ENCODE measurements at regions of chr19 and their contacts with region 1.

Region 1: GRCh38 chr19:47790398-47790814 is 11.9 kb downstream of the SELENOW start:
- DNase-seq: peak; percentile 93
- ATAC-seq: peak; percentile 81
- H3K4me3 Mint-ChIP-seq: no peak overlapping the region
- H3K27ac Mint-ChIP-seq: no peak overlapping the region
- H3K4me1 Mint-ChIP-seq: no peaks in the 10 kb centered on the region
- H3K27me3 Mint-ChIP-seq: no peaks in the 10 kb centered on the region

Region 2: GRCh38 chr19:47713046-47714021 is 77.1 kb before region 1 on chr19 and contains the start of gene EHD2:
- CTCF ChIA-PET with region 1: interaction called, 6 read pairs
- POLR2A ChIA-PET with region 1: no interaction called
- intact Hi-C with region 1: loop called (anchors 1 to 5 kb)
- DNase-seq: peak; percentile 76
- ATAC-seq: peak; percentile 78
- H3K4me3 Mint-ChIP-seq: peak within 1 kb of the TSS; percentile 53
- H3K27ac Mint-ChIP-seq: no peak within 1 kb of the TSS
- H3K4me1 Mint-ChIP-seq: peaks cover 5% of the 10 kb centered on the region
- H3K27me3 Mint-ChIP-seq: peaks cover 37% of the 10 kb centered on the region
- total RNA-seq, gene EHD2: 1.6 to 2.5 TPM

Region 3: GRCh38 chr19:47765523-47766358 is 24.7 kb before region 1 on chr19:
- CTCF ChIA-PET with region 1: interaction called, 9 read pairs
- POLR2A ChIA-PET with region 1: no interaction called
- intact Hi-C with region 1: loop called (anchors 1 kb)
- DNase-seq: peak; percentile 74
- ATAC-seq: peak; percentile 67
- H3K4me3 Mint-ChIP-seq: no peak overlapping the region
- H3K27ac Mint-ChIP-seq: no peak overlapping the region
- H3K4me1 Mint-ChIP-seq: peaks cover 9% of the 10 kb centered on the region
- H3K27me3 Mint-ChIP-seq: peaks cover 3% of the 10 kb centered on the region

Region 4: DNA sequence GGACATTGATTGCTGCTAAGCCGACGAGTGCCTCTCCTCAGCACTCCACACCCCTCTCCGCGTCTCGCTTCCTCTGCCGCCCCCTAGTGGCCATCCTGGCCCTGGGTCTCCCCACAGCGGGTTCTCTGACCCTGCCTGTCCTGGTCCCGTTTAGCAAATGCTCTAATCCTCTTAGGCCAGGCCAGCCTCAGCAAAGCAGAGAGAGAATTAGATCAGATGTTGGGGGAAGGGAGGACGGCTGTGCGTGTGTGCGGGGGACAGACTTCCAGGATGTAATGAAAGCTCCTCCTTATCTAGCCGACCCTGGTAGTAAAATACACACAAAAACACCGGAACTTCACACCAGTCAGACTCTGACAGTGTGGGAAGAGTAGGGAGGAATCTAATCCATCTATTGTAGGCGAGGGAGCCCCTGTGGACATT is 73.1 kb after region 1 on chr19:
- CTCF ChIA-PET with region 1: interaction called, 9 read pairs
- POLR2A ChIA-PET with region 1: no interaction called
- intact Hi-C with region 1: loop called in 1 of 2 experiments (anchors 1 kb)
- DNase-seq: peak; percentile 94
- ATAC-seq: peak; percentile 98
- H3K4me3 Mint-ChIP-seq: no peak overlapping the region
- H3K27ac Mint-ChIP-seq: no peak overlapping the region
- H3K4me1 Mint-ChIP-seq: no peaks in the 10 kb centered on the region
- H3K27me3 Mint-ChIP-seq: peaks cover 11% of the 10 kb centered on the region